PC-9 (cell line): ENCODE measurements at regions of chr6 and their contacts with region 1.

Region 1: DNA sequence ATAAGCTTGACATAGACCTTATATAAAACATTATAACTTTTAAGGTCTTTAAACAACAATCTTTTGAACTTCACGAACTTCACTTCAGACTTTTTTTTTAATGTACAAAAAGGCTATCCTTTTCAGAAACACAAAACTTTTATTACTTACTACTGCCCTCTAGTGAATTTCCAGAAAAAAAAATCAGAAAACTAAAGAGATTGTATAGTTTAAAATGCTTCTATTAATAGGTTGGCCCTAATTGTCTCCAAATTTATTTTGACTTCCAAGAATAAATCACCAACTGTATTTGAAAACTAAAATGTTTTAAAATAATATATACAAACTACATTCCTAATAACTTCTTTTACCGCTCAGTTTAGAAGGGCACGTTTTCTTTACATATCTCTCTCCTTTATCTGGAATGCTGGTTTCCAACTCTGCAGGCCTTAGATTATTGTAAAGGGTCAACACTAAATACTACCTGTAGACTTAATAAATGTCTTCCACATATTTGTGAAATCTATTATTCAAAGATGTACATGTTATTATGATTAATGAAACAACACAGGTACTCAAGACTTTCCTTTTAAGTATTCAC is 66.8 kb downstream of the LMBRD1 start:
- DNase-seq: no peak
- H3K4me3 ChIP-seq: no peak overlapping the region
- H3K27ac ChIP-seq: no peak overlapping the region
- H3K4me1 ChIP-seq: no peaks in the 10 kb centered on the region
- H3K27me3 ChIP-seq: no peaks in the 10 kb centered on the region
- CTCF ChIP-seq: peak; percentile 61

Region 2: DNA sequence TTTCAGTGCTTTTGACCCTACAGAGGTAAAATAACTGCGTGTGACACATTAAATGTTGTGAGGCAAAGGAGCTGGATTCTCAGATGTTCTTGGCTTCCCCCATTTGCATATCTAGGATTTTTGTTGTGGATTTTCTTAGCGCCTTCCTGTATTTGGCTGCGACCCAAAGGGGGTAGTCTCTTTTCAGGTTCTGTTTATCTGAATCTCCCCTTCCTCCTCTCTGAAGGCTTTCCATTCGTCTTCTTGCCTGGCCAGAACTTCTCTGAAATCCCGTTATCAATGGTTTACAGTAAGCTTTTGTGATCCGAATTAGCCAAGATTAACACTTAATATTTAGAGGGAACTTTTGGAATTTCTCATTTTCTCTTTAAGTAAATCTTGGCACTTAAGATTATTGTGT is 1034.1 kb before region 1 on chr6:
- CTCF ChIA-PET with region 1: no interaction called
- POLR2A ChIA-PET with region 1: no interaction called
- intact Hi-C with region 1: no loop called
- DNase-seq: no peak
- H3K4me3 ChIP-seq: no peak overlapping the region
- H3K27ac ChIP-seq: no peak overlapping the region
- H3K4me1 ChIP-seq: no peaks in the 10 kb centered on the region
- H3K27me3 ChIP-seq: no peaks in the 10 kb centered on the region
- CTCF ChIP-seq: no peak

Region 3: GRCh38 chr6:68876792-68877493 is 853.0 kb before region 1 on chr6:
- CTCF ChIA-PET with region 1: interaction called, 3 read pairs
- POLR2A ChIA-PET with region 1: no interaction called
- intact Hi-C with region 1: loop called (anchors 5 kb)
- DNase-seq: no peak
- H3K4me3 ChIP-seq: no peak overlapping the region
- H3K27ac ChIP-seq: no peak overlapping the region
- H3K4me1 ChIP-seq: no peaks in the 10 kb centered on the region
- H3K27me3 ChIP-seq: no peaks in the 10 kb centered on the region
- CTCF ChIP-seq: peak; percentile 66

Region 4: DNA sequence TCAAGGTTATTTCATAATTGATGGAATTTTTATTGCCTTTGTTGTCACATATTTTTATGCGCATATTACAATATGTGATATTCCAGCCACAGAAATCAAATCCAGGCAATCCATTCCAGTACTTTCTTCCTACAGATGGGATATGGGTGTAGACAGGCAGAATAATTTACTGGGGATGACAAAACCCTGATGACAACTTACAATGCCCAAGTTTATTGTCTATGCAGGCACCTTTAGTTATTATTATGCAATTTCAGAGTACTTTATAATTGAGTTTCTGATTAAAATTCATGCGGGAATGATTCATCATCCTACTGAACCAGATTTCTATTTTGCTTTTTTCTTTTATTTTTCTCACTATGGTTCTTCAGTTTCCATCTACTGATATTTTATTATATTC is 291.8 kb before region 1 on chr6:
- CTCF ChIA-PET with region 1: no interaction called
- POLR2A ChIA-PET with region 1: no interaction called
- intact Hi-C with region 1: no loop called
- DNase-seq: no peak
- H3K4me3 ChIP-seq: no peak overlapping the region
- H3K27ac ChIP-seq: no peak overlapping the region
- H3K4me1 ChIP-seq: no peaks in the 10 kb centered on the region
- H3K27me3 ChIP-seq: no peaks in the 10 kb centered on the region
- CTCF ChIP-seq: no peak

Region 5: DNA sequence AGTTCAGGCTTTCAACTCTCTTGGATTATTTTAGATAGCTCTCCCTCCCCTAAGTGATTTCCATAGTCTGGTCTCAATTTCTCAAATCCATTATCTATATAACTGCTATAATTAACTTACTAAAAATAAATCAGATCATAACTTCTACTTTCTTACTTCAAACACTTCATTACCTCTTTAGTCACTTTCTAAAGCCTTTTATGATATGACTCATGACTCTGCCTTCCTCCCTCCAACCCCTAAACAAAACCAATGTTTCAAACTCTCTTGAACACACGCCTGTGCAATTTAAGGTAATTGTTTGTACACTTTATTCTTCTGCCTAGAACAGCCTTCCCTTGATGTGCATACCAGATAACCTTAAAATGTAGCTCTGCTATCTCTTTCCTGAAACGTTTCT is 33.7 kb before region 1 on chr6:
- CTCF ChIA-PET with region 1: no interaction called
- POLR2A ChIA-PET with region 1: interaction called, 12 read pairs
- intact Hi-C with region 1: no loop called
- DNase-seq: no peak
- H3K4me3 ChIP-seq: no peak overlapping the region
- H3K27ac ChIP-seq: no peak overlapping the region
- H3K4me1 ChIP-seq: no peaks in the 10 kb centered on the region
- H3K27me3 ChIP-seq: no peaks in the 10 kb centered on the region
- CTCF ChIP-seq: no peak

Region 6: DNA sequence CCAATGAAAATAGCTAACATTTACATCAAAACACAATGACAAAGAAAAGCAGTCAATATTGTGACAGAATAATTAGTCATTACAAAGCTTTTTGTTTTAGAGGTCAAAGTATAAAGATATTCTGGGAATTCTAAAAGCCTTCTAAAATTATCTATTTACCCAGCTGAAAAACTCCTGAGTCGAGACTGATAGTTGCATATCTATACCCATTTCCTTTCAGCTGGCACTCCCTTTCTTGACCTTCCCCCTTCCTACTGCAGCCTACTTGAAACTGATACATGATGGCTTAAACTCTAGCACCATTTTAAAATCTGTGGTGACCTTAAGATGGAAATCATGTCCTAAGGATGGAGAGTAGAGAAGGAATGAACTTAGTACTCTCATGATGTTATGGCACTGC is 28.3 kb after region 1 on chr6:
- CTCF ChIA-PET with region 1: no interaction called
- POLR2A ChIA-PET with region 1: no interaction called
- intact Hi-C with region 1: no loop called
- DNase-seq: no peak
- H3K4me3 ChIP-seq: no peak overlapping the region
- H3K27ac ChIP-seq: no peak overlapping the region
- H3K4me1 ChIP-seq: no peaks in the 10 kb centered on the region
- H3K27me3 ChIP-seq: no peaks in the 10 kb centered on the region
- CTCF ChIP-seq: no peak

Region 7: GRCh38 chr6:69868961-69869360 is 139.0 kb after region 1 on chr6:
- CTCF ChIA-PET with region 1: no interaction called
- POLR2A ChIA-PET with region 1: no interaction called
- intact Hi-C with region 1: no loop called
- DNase-seq: no peak
- H3K4me3 ChIP-seq: no peak overlapping the region
- H3K27ac ChIP-seq: no peak overlapping the region
- H3K4me1 ChIP-seq: no peaks in the 10 kb centered on the region
- H3K27me3 ChIP-seq: peaks cover 31% of the 10 kb centered on the region
- CTCF ChIP-seq: no peak